Dorsolateral prefrontal cortex (tissue), 120 donors: ENCODE measurements at regions of chr9 and their contacts with region 1.

Region 1: DNA sequence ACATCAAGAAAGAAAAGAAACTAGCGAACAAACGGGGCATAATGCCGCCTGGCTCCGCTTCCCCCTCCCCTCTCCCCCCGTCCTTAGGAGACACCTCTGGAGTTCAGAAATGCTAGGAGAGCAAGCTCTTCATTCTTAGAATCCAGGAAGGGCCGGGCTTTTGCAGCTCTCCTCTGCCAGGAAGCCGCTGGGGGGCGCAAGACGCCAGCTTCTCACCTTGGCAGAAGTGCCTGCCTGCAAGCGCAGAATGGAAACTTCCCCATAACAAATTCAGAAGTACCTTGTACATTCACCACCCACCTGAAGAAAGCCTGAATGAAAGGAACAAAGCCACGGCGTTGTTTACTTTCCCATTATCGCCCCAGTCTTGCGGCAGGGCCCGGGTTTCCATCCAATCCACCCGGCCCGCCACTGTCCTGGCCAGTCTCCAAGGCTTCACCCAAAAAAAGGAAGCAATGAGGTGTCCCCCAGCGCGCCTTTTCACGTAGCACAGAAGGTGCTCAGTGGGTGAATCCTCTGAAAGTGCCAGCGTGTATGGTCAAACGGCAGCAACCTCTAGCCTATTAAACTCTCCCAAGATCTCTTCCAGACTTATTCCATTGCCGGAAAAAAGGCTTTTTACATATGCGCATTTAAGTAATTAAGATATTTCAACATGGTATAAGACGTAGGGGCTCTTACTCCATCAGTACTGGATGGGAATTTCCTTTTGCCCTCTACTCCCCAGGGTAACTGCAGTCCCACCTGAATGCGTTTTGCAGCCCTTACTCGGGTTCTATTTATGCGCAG is 1.6 kb upstream of the GADD45G start:
- DNase-seq: peak; percentile 88 to 94 (median 92)
- H3K4me3 ChIP-seq: peak overlapping the region; percentile 35 to 89 (median 78)
- H3K27ac ChIP-seq: peak overlapping the region in 40 of 59 donors; percentile 5 to 96 (median 86)
- H3K27me3 ChIP-seq: no peaks in the 10 kb centered on the region
- CTCF ChIP-seq: peak; percentile 67 to 94 (median 86)

Region 2: GRCh38 chr9:89160806-89161205 is 442.4 kb before region 1 on chr9:
- intact Hi-C with region 1: no loop called
- DNase-seq: no peak
- H3K4me3 ChIP-seq: no peak overlapping the region
- H3K27ac ChIP-seq: no peak overlapping the region
- H3K27me3 ChIP-seq: no peaks in the 10 kb centered on the region
- CTCF ChIP-seq: no peak

Region 3: GRCh38 chr9:89564352-89564878 is 38.8 kb before region 1 on chr9:
- intact Hi-C with region 1: no loop called
- DNase-seq: peak in 1 of 10 donors; percentile 27
- H3K4me3 ChIP-seq: no peak overlapping the region
- H3K27ac ChIP-seq: no peak overlapping the region
- H3K27me3 ChIP-seq: no peaks in the 10 kb centered on the region
- CTCF ChIP-seq: peak in 12 of 56 donors; percentile 10 to 34 (median 21)

Region 4: DNA sequence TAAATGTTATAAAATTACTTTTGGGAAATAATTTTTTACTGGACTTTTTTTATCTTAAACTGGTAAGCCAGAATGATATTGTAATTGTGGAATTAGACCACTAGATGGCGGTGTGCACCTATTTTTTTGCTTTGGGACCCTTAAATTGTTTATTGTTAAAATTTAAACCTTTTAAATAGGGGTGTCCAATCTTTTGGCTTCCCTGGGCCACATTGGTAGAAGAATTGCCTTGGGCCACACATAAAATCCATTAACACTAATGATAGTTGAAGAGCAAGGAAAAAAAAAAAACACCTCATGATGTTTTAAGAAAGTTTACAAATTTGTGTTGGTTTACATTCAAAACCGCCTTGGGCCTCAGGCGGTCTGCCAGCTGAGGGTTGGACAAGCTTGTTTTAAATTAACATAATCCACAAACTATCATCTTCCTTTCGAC is 26.8 kb before region 1 on chr9:
- intact Hi-C with region 1: no loop called
- DNase-seq: no peak
- H3K4me3 ChIP-seq: no peak overlapping the region
- H3K27ac ChIP-seq: no peak overlapping the region
- H3K27me3 ChIP-seq: peaks cover 0 to 8% (median 0%) of the 10 kb centered on the region in 45 donors
- CTCF ChIP-seq: peak; percentile 43 to 88 (median 80)

Region 5: GRCh38 chr9:89675058-89675742 is 72.0 kb after region 1 on chr9:
- intact Hi-C with region 1: loop called in 1 of 2 experiments (anchors 5 kb)
- DNase-seq: peak in 7 of 10 donors; percentile 49 to 80 (median 65)
- H3K4me3 ChIP-seq: peak overlapping the region in 2 of 59 donors; percentile 8 to 18
- H3K27ac ChIP-seq: peak overlapping the region in 36 of 59 donors; percentile 3 to 85 (median 66)
- H3K27me3 ChIP-seq: no peaks in the 10 kb centered on the region
- CTCF ChIP-seq: peak in 1 of 56 donors; percentile 4

Region 6: DNA sequence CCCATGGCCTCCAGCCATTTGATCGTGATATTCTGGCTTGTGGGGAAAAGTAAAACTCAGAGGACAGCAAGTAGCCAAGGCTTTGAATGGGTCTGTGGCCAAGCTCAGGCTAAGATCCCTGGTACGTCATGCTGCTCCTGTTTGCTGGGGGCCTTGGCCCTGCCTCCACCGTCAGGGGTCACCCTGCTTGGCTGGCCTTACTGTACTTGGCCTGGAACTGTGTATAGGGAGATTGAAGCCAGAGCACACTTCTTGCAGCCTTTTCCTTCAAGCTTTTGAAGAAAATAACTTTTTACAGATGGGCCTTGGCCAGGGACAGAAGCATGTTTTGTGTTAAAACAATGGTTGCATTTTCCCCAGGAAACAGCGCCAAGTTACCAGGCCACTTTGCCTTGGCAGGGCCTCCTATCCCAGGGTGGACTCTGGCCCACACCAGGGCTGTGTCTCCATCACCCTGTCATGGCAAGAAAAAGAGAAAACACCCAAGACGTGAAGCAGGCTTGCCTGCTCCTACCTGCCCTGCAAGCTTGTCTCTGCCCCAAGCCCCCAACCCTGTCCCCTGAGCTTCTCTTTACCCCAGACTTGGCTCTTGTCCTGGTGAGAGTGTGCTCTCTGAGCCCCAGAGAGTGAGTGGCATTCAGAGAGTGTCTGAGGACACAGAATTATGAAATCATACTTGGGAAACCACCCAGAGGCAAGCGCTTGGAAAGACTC is 288.6 kb after region 1 on chr9:
- intact Hi-C with region 1: loop called in 1 of 2 experiments (anchors 5 kb)
- DNase-seq: peak in 3 of 10 donors; percentile 27 to 50 (median 39)
- H3K4me3 ChIP-seq: no peak overlapping the region
- H3K27ac ChIP-seq: peak overlapping the region in 6 of 59 donors; percentile 15 to 40 (median 30)
- H3K27me3 ChIP-seq: no peaks in the 10 kb centered on the region
- CTCF ChIP-seq: no peak

Region 7: GRCh38 chr9:89999534-90000370 is 396.6 kb after region 1 on chr9:
- intact Hi-C with region 1: loop called (anchors 5 kb)
- DNase-seq: peak in 2 of 10 donors; percentile 22 to 66
- H3K4me3 ChIP-seq: peak overlapping the region in 38 of 59 donors; percentile 0 to 47 (median 29)
- H3K27ac ChIP-seq: peak overlapping the region in 55 of 59 donors; percentile 2 to 86 (median 66)
- H3K27me3 ChIP-seq: no peaks in the 10 kb centered on the region
- CTCF ChIP-seq: peak in 1 of 56 donors; percentile 21

Region 8: GRCh38 chr9:90642570-90643539 is 1039.7 kb after region 1 on chr9 and contains the start of gene DIRAS2:
- intact Hi-C with region 1: loop called (anchors 10 kb)
- DNase-seq: peak; percentile 61 to 95 (median 84)
- H3K4me3 ChIP-seq: peak within 1 kb of the TSS; percentile 49 to 85 (median 72)
- H3K27ac ChIP-seq: peak within 1 kb of the TSS; percentile 15 to 95 (median 83)
- H3K27me3 ChIP-seq: no peaks in the 10 kb centered on the region
- CTCF ChIP-seq: peak; percentile 19 to 86 (median 68)
- total RNA-seq, gene DIRAS2: 59.9 to 367 (median 223) TPM